CD4-positive, alpha-beta T cell (primary cell): ENCODE measurements at regions of chr3 and their contacts with region 1.

Region 1: DNA sequence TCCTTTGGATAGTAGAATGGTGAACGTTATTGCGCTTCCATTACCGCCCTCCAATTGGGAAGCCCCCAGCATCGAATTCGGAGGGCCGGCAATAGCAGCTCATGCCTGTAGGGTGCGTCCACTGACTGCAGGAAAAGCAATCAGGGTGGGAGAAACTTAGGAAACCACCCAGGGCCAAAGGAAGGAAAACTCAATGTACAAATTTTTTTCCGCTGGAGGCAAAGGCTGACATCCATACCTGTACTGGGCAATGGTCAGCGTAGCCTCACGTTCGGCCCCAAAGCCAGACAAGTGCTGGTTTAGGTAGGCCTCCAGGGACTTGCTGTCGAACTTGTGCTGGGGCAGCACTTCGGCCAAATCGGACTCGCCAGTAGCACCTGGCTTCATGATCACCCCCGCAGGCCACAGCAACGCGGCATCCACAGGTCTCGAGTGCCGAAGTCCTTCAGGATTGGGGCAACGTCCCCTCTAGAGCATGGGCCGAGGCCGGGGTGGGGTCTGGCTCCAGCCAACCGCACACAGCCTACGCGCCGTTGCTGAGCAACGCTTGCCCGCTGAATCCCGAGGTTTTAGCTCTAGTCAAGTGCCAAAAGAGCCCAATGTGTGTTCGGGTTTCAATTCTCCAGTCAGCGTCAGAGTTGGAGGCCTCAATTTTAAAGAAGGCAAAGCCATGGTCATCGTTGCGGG is at the start of gene ACAD11:
- DNase-seq: peak in 13 of 14 experiments; percentile 2 to 59 (median 13)
- ATAC-seq: peak; percentile 16
- H3K4me3 ChIP-seq: peak within 1 kb of the TSS; percentile 93
- H3K4me3 Mint-ChIP-seq: peak within 1 kb of the TSS; percentile 100
- H3K27ac ChIP-seq: peak within 1 kb of the TSS; percentile 41 to 62
- H3K27ac Mint-ChIP-seq: peak within 1 kb of the TSS; percentile 98
- H3K4me1 ChIP-seq: peaks cover 8% of the 10 kb centered on the region
- H3K4me1 Mint-ChIP-seq: peaks cover 77% of the 10 kb centered on the region
- H3K27me3 ChIP-seq: no peaks in the 10 kb centered on the region
- H3K27me3 Mint-ChIP-seq: no peaks in the 10 kb centered on the region
- CTCF ChIP-seq: peak; percentile 40
- total RNA-seq, gene ACAD11: 26.6 to 27.9 TPM

Region 2: DNA sequence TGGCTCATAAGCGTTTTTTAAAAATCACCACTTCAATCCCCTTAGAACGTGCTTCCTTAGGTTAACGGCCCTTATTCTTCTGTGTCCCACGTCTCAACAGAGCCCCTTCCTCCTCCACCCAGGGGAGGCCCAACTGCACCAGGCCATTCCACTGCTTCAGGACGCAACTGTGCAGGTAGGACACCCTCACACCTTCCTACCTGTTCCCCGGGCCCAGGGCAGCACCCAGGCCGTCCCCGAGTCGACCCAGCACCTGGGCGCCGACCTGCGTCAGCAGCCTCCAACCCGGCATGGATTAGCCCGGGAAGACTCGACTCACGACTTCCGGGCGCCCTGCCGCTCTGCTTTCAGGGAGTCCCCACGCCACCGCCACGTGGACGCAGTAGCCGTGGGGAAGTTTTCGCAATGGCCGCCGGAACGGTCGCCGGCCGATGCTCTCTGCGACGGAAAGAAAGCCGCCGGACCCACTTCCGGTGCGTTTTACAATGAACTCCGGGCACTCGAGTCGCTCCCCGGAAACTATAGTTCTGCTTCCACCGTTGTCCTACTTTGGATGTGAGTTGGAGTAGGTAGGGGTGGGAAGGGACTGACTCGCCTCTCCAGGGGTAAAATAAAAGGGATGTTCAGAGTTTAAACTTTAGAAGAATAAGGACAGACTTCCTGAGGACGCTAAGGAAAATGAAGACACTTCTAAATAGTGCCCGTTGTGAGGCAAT is 1156.8 kb before region 1 on chr3 and contains the start of gene MRPL3:
- CTCF ChIA-PET with region 1: no interaction called
- POLR2A ChIA-PET with region 1: no interaction called
- intact Hi-C with region 1: loop called in 1 of 2 experiments (anchors 5 kb)
- DNase-seq: peak; percentile 72 to 93 (median 78)
- ATAC-seq: peak; percentile 89
- H3K4me3 ChIP-seq: peak within 1 kb of the TSS; percentile 71
- H3K4me3 Mint-ChIP-seq: peak within 1 kb of the TSS; percentile 98
- H3K27ac ChIP-seq: peak within 1 kb of the TSS; percentile 66 to 76
- H3K27ac Mint-ChIP-seq: peak within 1 kb of the TSS; percentile 93
- H3K4me1 ChIP-seq: peaks cover 16% of the 10 kb centered on the region
- H3K4me1 Mint-ChIP-seq: peaks cover 54% of the 10 kb centered on the region
- H3K27me3 ChIP-seq: no peaks in the 10 kb centered on the region
- H3K27me3 Mint-ChIP-seq: no peaks in the 10 kb centered on the region
- CTCF ChIP-seq: no peak
- total RNA-seq, gene MRPL3: 36.0 to 37.6 TPM

Region 3: GRCh38 chr3:132670795-132671194 is 11.3 kb after region 1 on chr3:
- CTCF ChIA-PET with region 1: interaction called, 6 read pairs
- POLR2A ChIA-PET with region 1: interaction called, 10 read pairs
- intact Hi-C with region 1: no loop called
- DNase-seq: no peak
- ATAC-seq: no peak
- H3K4me3 ChIP-seq: no peak overlapping the region
- H3K4me3 Mint-ChIP-seq: no peak overlapping the region
- H3K27ac ChIP-seq: no peak overlapping the region
- H3K27ac Mint-ChIP-seq: no peak overlapping the region
- H3K4me1 ChIP-seq: no peaks in the 10 kb centered on the region
- H3K4me1 Mint-ChIP-seq: peaks cover 5% of the 10 kb centered on the region
- H3K27me3 ChIP-seq: no peaks in the 10 kb centered on the region
- H3K27me3 Mint-ChIP-seq: no peaks in the 10 kb centered on the region
- CTCF ChIP-seq: no peak

Region 4: DNA sequence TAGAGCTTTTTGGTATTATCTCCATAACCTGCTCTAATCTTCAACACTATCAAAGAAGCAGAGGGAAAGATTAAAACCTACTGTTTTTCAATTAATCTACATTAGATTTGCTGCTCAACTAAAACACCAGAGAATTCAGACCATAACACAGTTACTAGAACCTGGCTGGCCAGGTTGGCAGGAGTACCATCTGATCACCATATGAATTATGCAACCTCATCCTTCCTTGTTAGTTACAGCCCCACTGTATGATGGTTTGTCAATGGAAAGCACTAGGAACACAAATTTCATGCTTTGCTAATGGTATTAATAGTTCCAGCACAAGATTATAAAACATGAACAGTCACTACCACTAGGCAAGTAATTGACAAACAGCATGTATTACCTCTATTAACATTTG is 56.9 kb after region 1 on chr3:
- CTCF ChIA-PET with region 1: no interaction called
- POLR2A ChIA-PET with region 1: interaction called, 4 read pairs
- intact Hi-C with region 1: loop called in 1 of 2 experiments (anchors 5 kb)
- DNase-seq: no peak
- ATAC-seq: no peak
- H3K4me3 ChIP-seq: no peak overlapping the region
- H3K4me3 Mint-ChIP-seq: no peak overlapping the region
- H3K27ac ChIP-seq: no peak overlapping the region
- H3K27ac Mint-ChIP-seq: no peak overlapping the region
- H3K4me1 ChIP-seq: peaks cover 15% of the 10 kb centered on the region
- H3K4me1 Mint-ChIP-seq: peaks cover 50% of the 10 kb centered on the region
- H3K27me3 ChIP-seq: no peaks in the 10 kb centered on the region
- H3K27me3 Mint-ChIP-seq: no peaks in the 10 kb centered on the region
- CTCF ChIP-seq: no peak

Region 5: GRCh38 chr3:132840201-132840700 is 180.7 kb after region 1 on chr3:
- CTCF ChIA-PET with region 1: no interaction called
- POLR2A ChIA-PET with region 1: no interaction called
- intact Hi-C with region 1: no loop called
- DNase-seq: no peak
- ATAC-seq: no peak
- H3K4me3 ChIP-seq: no peak overlapping the region
- H3K4me3 Mint-ChIP-seq: no peak overlapping the region
- H3K27ac ChIP-seq: no peak overlapping the region
- H3K27ac Mint-ChIP-seq: no peak overlapping the region
- H3K4me1 ChIP-seq: no peaks in the 10 kb centered on the region
- H3K4me1 Mint-ChIP-seq: no peaks in the 10 kb centered on the region
- H3K27me3 ChIP-seq: no peaks in the 10 kb centered on the region
- H3K27me3 Mint-ChIP-seq: peaks cover 36% of the 10 kb centered on the region
- CTCF ChIP-seq: no peak

Region 6: DNA sequence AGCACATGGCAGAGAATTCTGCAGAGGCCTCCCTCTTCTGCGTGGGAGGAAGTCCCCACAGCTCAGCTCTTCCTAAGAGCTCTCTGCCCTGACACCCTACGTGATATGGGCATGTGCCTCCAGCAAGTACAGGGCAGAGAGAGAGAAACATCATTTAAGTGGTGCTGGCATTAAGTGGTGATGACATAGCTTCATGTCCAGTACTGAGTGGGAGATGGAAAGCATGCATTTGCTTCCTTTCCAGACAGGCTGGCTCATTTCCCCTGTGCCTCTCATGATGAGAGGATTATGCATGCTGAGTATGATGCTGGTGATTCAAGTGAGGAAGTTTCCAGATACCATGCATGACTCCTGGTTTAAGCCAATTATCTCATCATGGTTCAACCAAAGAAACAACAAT is 767.2 kb after region 1 on chr3:
- CTCF ChIA-PET with region 1: no interaction called
- POLR2A ChIA-PET with region 1: no interaction called
- intact Hi-C with region 1: loop called in 1 of 2 experiments (anchors 5 kb)
- DNase-seq: no peak
- ATAC-seq: no peak
- H3K4me3 ChIP-seq: no peak overlapping the region
- H3K4me3 Mint-ChIP-seq: no peak overlapping the region
- H3K27ac ChIP-seq: no peak overlapping the region
- H3K27ac Mint-ChIP-seq: no peak overlapping the region
- H3K4me1 ChIP-seq: peaks cover 6% of the 10 kb centered on the region
- H3K4me1 Mint-ChIP-seq: no peaks in the 10 kb centered on the region
- H3K27me3 ChIP-seq: no peaks in the 10 kb centered on the region
- H3K27me3 Mint-ChIP-seq: peaks cover 9% of the 10 kb centered on the region
- CTCF ChIP-seq: no peak

Region 7: DNA sequence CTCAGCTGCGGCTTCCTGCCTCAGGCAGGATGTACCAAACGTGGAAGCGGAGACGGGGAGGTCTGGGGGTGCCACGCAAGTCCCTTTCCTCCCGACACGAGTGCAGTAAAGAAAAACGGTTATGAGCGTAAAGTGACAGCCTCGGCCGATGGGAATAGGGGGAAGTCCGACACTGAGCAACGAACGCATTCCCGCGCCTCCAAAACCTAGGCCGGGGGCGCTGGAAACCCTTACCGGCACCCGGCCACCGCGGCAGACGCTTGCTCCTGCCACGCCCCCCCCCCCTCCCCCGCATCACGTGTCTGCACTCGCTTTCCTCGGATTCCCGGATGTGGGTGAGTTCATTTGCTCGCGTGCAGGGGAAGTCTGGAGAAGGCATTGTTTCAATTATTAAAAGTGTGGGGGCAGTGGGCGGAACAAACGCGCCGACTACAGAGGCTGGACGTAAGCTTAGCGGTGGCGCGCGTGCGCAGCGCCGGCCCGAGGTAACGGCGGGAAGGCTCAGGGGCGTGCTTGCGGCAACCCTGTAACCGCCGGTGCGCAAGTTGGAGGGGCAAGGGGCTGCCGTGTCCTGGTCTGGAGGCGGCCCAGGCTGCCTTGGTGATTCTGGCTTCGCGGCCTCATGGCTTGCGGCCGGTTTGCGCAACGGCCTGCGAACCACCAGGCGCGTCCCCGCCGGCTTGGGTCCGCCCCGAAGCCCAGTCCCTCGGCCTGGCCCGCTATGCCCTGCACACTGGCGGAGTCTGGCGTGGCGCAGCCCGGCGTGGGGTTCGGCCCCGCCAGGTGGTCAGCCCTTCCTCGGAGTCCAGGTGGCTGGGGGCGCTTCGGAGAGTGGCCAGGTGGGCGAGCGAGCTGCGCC is 1826.4 kb after region 1 on chr3 and contains the starts of genes ANAPC13 and CEP63:
- CTCF ChIA-PET with region 1: no interaction called
- POLR2A ChIA-PET with region 1: no interaction called
- intact Hi-C with region 1: loop called in 1 of 2 experiments (anchors 5 kb)
- DNase-seq: peak; percentile 84 to 99 (median 90)
- ATAC-seq: peak; percentile 76
- H3K4me3 ChIP-seq: peak within 1 kb of the TSS; percentile 96
- H3K4me3 Mint-ChIP-seq: peak within 1 kb of the TSS; percentile 100
- H3K27ac ChIP-seq: peak within 1 kb of the TSS; percentile 86 to 95
- H3K27ac Mint-ChIP-seq: peak within 1 kb of the TSS; percentile 98
- H3K4me1 ChIP-seq: peaks cover 29% of the 10 kb centered on the region
- H3K4me1 Mint-ChIP-seq: peaks cover 71% of the 10 kb centered on the region
- H3K27me3 ChIP-seq: no peaks in the 10 kb centered on the region
- H3K27me3 Mint-ChIP-seq: no peaks in the 10 kb centered on the region
- CTCF ChIP-seq: no peak
- total RNA-seq, gene ANAPC13: 12.9 to 16.8 TPM
- total RNA-seq, gene CEP63: 13.2 to 15.1 TPM